GM12878 (cell line): ENCODE measurements at regions of chr1 and their contacts with region 1.

Region 1: GRCh38 chr1:155091071-155091709 is 12.6 kb downstream of the EFNA3 start:
- DNase-seq: no peak
- ATAC-seq: peak; percentile 88
- H3K4me3 ChIP-seq: no peak overlapping the region
- H3K27ac ChIP-seq: no peak overlapping the region
- H3K4me1 ChIP-seq: peaks cover 6% of the 10 kb centered on the region
- H3K27me3 ChIP-seq: peaks cover 0 to 2% of the 10 kb centered on the region in 2 experiments; a peak in 1 of 4 replicates
- CTCF ChIP-seq: peak; percentile 85 to 98 (median 97)
- EP300 ChIP-seq: no peak
- POLR2A ChIP-seq: no peak
- RAD21 ChIP-seq: peak; percentile 79

Region 2: GRCh38 chr1:154831462-154831861 is 259.7 kb before region 1 on chr1:
- CTCF ChIA-PET with region 1: no interaction called
- POLR2A ChIA-PET with region 1: no interaction called
- RAD21 ChIA-PET with region 1: no interaction called
- SMC1A ChIA-PET with region 1: no interaction called
- in situ Hi-C with region 1: no loop called
- intact Hi-C with region 1: no loop called
- DNase-seq: no peak
- ATAC-seq: no peak
- H3K4me3 ChIP-seq: no peak overlapping the region
- H3K27ac ChIP-seq: no peak overlapping the region
- H3K4me1 ChIP-seq: peaks cover 6% of the 10 kb centered on the region
- H3K27me3 ChIP-seq: no peaks in the 10 kb centered on the region
- CTCF ChIP-seq: no peak
- EP300 ChIP-seq: no peak
- POLR2A ChIP-seq: no peak
- RAD21 ChIP-seq: no peak

Region 3: GRCh38 chr1:155117617-155118016 is 26.4 kb after region 1 on chr1:
- CTCF ChIA-PET with region 1: interaction called, 10 read pairs
- POLR2A ChIA-PET with region 1: no interaction called
- RAD21 ChIA-PET with region 1: no interaction called
- SMC1A ChIA-PET with region 1: interaction called, 3 read pairs
- in situ Hi-C with region 1: no loop called
- intact Hi-C with region 1: no loop called
- DNase-seq: no peak
- ATAC-seq: no peak
- H3K4me3 ChIP-seq: no peak overlapping the region
- H3K27ac ChIP-seq: no peak overlapping the region
- H3K4me1 ChIP-seq: peaks cover 5% of the 10 kb centered on the region; the same call in 1 of the 2 replicates
- H3K27me3 ChIP-seq: peaks cover 0 to 2% of the 10 kb centered on the region in 2 experiments; a peak in 1 of 4 replicates
- CTCF ChIP-seq: no peak
- EP300 ChIP-seq: no peak
- POLR2A ChIP-seq: no peak
- RAD21 ChIP-seq: no peak

Region 4: GRCh38 chr1:155135415-155136028 is 44.3 kb after region 1 on chr1 and contains the start of gene SLC50A1:
- CTCF ChIA-PET with region 1: interaction called, 11 read pairs
- POLR2A ChIA-PET with region 1: no interaction called
- RAD21 ChIA-PET with region 1: interaction called, 9 read pairs
- SMC1A ChIA-PET with region 1: interaction called, 4 read pairs
- in situ Hi-C with region 1: no loop called
- intact Hi-C with region 1: no loop called
- DNase-seq: peak; percentile 66
- ATAC-seq: peak; percentile 89
- H3K4me3 ChIP-seq: peak within 1 kb of the TSS; percentile 90
- H3K27ac ChIP-seq: peak within 1 kb of the TSS; percentile 97
- H3K4me1 ChIP-seq: peaks cover 13% of the 10 kb centered on the region
- H3K27me3 ChIP-seq: no peaks in the 10 kb centered on the region
- CTCF ChIP-seq: no peak
- EP300 ChIP-seq: no peak
- POLR2A ChIP-seq: peak; percentile 93
- RAD21 ChIP-seq: no peak
- polyA plus RNA-seq, gene SLC50A1: 70.8 to 85.6 TPM

Region 5: GRCh38 chr1:155145491-155145890 is 54.3 kb after region 1 on chr1:
- CTCF ChIA-PET with region 1: interaction called, 13 read pairs
- POLR2A ChIA-PET with region 1: no interaction called
- RAD21 ChIA-PET with region 1: interaction called, 3 read pairs
- SMC1A ChIA-PET with region 1: no interaction called
- in situ Hi-C with region 1: no loop called
- intact Hi-C with region 1: no loop called
- DNase-seq: no peak
- ATAC-seq: no peak
- H3K4me3 ChIP-seq: no peak overlapping the region
- H3K27ac ChIP-seq: no peak overlapping the region
- H3K4me1 ChIP-seq: peaks cover 6% of the 10 kb centered on the region
- H3K27me3 ChIP-seq: no peaks in the 10 kb centered on the region
- CTCF ChIP-seq: no peak
- EP300 ChIP-seq: no peak
- POLR2A ChIP-seq: no peak
- RAD21 ChIP-seq: no peak

Region 6: DNA sequence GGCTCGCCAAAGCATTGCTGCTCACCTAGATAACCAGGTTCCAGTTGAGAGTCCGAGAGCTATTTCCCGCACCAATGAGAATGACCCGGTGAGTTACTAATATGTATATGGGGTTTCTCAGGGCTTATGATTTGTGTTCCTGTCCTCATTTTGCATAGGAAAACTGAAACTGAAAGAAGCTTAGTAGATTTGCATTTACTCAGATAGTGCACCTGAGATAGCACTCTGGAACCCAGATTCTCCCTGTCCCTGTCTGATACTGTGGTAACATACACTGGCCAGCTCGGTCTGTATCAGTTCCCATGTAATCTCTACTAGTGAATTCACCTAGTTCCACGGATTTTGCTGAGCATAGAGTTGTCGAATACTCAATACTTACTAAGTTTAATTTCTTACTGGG is 625.9 kb after region 1 on chr1:
- CTCF ChIA-PET with region 1: no interaction called
- POLR2A ChIA-PET with region 1: no interaction called
- RAD21 ChIA-PET with region 1: no interaction called
- SMC1A ChIA-PET with region 1: no interaction called
- in situ Hi-C with region 1: no loop called
- intact Hi-C with region 1: no loop called
- DNase-seq: peak; percentile 56
- ATAC-seq: peak; percentile 96
- H3K4me3 ChIP-seq: no peak overlapping the region; the same call in 1 of the 2 replicates
- H3K27ac ChIP-seq: peak overlapping the region; percentile 23
- H3K4me1 ChIP-seq: peaks cover 12% of the 10 kb centered on the region
- H3K27me3 ChIP-seq: no peaks in the 10 kb centered on the region
- CTCF ChIP-seq: no peak
- EP300 ChIP-seq: no peak
- POLR2A ChIP-seq: no peak
- RAD21 ChIP-seq: no peak